Activated CD8-positive, alpha-beta T cell treated with anti-CD3 and anti-CD28 coated beads for 36 hours (primary cell): ENCODE measurements at regions of chr19 and their contacts with region 1.

Region 1: GRCh38 chr19:38634757-38635482 is 12.5 kb upstream of the ACTN4 start:
- DNase-seq: peak; percentile 80
- ATAC-seq: no peak
- H3K4me3 Mint-ChIP-seq: no peak overlapping the region
- H3K27ac Mint-ChIP-seq: peak overlapping the region; percentile 76
- H3K4me1 Mint-ChIP-seq: peaks cover 33% of the 10 kb centered on the region
- H3K27me3 Mint-ChIP-seq: no peaks in the 10 kb centered on the region
- CTCF ChIP-seq: peak; percentile 95

Region 2: GRCh38 chr19:38514812-38515633 is 119.9 kb before region 1 on chr19:
- CTCF ChIA-PET with region 1: interaction called, 51 read pairs
- POLR2A ChIA-PET with region 1: no interaction called
- intact Hi-C with region 1: no loop called
- DNase-seq: peak; percentile 81
- ATAC-seq: peak; percentile 96
- H3K4me3 Mint-ChIP-seq: no peak overlapping the region
- H3K27ac Mint-ChIP-seq: no peak overlapping the region
- H3K4me1 Mint-ChIP-seq: peaks cover 15% of the 10 kb centered on the region
- H3K27me3 Mint-ChIP-seq: peaks cover 3% of the 10 kb centered on the region
- CTCF ChIP-seq: peak; percentile 95

Region 3: DNA sequence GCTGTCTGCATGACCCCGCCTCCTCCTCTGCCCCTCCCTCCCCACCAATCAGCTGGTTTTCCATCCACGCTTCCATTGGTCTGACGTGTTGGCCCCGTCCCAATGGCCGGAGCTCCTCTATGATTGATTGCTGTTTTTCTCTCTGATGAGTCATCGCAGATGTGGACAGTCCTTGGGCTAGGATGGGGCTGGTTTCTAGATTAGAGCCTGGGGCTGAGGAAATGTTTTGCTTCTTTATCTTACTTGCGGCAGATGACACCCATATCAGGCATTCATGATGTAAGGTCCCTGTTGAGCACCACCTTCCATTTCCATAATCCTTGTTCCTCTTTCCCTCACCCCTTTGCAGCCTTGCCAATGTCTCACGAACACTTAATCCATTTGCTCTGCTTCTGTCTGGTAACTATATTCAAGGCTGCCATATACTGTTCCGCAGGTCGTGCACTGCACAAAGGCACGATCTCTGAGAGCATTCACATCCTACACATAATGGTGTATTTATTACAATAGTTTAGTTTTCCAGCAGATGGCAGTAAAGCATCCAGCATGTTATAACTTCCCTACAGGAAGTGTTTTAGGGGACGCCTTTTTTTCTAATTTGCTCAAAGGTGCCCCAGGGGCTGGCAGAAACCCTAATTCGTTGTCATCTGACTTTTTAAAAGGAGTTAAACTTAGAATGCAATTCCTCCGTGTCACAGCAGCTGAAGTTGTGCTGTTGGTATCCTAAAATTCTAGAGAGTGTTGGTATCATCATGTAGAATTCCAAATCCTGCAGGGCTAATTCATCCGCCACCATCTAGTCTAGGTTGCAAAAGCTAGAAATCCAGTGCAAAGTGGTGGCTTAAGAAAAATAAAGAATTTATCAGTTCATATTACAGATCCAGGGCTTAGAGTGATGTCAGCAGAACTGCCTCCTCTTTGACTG is 90.6 kb before region 1 on chr19:
- CTCF ChIA-PET with region 1: interaction called, 26 read pairs
- POLR2A ChIA-PET with region 1: no interaction called
- intact Hi-C with region 1: no loop called
- DNase-seq: peak; percentile 50
- ATAC-seq: peak; percentile 92
- H3K4me3 Mint-ChIP-seq: no peak overlapping the region
- H3K27ac Mint-ChIP-seq: no peak overlapping the region
- H3K4me1 Mint-ChIP-seq: peaks cover 20% of the 10 kb centered on the region
- H3K27me3 Mint-ChIP-seq: no peaks in the 10 kb centered on the region
- CTCF ChIP-seq: peak; percentile 68

Region 4: GRCh38 chr19:38618590-38619360 is 16.1 kb before region 1 on chr19 and contains the start of gene EIF3K:
- CTCF ChIA-PET with region 1: interaction called, 60 read pairs
- POLR2A ChIA-PET with region 1: interaction called, 4 read pairs
- intact Hi-C with region 1: no loop called
- DNase-seq: peak; percentile 99
- ATAC-seq: peak; percentile 74
- H3K4me3 Mint-ChIP-seq: peak within 1 kb of the TSS; percentile 99
- H3K27ac Mint-ChIP-seq: peak within 1 kb of the TSS; percentile 99
- H3K4me1 Mint-ChIP-seq: peaks cover 44% of the 10 kb centered on the region
- H3K27me3 Mint-ChIP-seq: no peaks in the 10 kb centered on the region
- CTCF ChIP-seq: no peak
- total RNA-seq, gene EIF3K: 306 to 308 TPM

Region 5: GRCh38 chr19:38647368-38647965 is 12.5 kb after region 1 on chr19 and contains the start of gene ACTN4:
- CTCF ChIA-PET with region 1: interaction called, 16 read pairs
- POLR2A ChIA-PET with region 1: interaction called, 5 read pairs
- intact Hi-C with region 1: no loop called
- DNase-seq: peak; percentile 99
- ATAC-seq: peak; percentile 95
- H3K4me3 Mint-ChIP-seq: peak within 1 kb of the TSS; percentile 97
- H3K27ac Mint-ChIP-seq: peak within 1 kb of the TSS; percentile 87
- H3K4me1 Mint-ChIP-seq: peaks cover 40% of the 10 kb centered on the region
- H3K27me3 Mint-ChIP-seq: peaks cover 10% of the 10 kb centered on the region
- CTCF ChIP-seq: no peak
- total RNA-seq, gene ACTN4: 183 to 189 TPM

Region 6: GRCh38 chr19:38657633-38658222 is 22.8 kb after region 1 on chr19:
- CTCF ChIA-PET with region 1: interaction called, 13 read pairs
- POLR2A ChIA-PET with region 1: interaction called, 3 read pairs
- intact Hi-C with region 1: no loop called
- DNase-seq: peak; percentile 26
- ATAC-seq: peak; percentile 9
- H3K4me3 Mint-ChIP-seq: no peak overlapping the region
- H3K27ac Mint-ChIP-seq: peak overlapping the region; percentile 73
- H3K4me1 Mint-ChIP-seq: peaks cover 61% of the 10 kb centered on the region
- H3K27me3 Mint-ChIP-seq: peaks cover 1% of the 10 kb centered on the region
- CTCF ChIP-seq: no peak